ENCODE measurements at regions of chr15 and their contacts with region 1.

Region 1: GRCh38 chr15:31344823-31345605 is 18.4 kb downstream of the KLF13 start:
- DNase-seq: peak; percentile 65
- ATAC-seq: peak; percentile 12
- H3K4me3 Mint-ChIP-seq: peak overlapping the region; percentile 87
- H3K27ac Mint-ChIP-seq: peak overlapping the region; percentile 97
- H3K4me1 Mint-ChIP-seq: peaks cover 97% of the 10 kb centered on the region
- H3K27me3 Mint-ChIP-seq: no peaks in the 10 kb centered on the region

Region 2: DNA sequence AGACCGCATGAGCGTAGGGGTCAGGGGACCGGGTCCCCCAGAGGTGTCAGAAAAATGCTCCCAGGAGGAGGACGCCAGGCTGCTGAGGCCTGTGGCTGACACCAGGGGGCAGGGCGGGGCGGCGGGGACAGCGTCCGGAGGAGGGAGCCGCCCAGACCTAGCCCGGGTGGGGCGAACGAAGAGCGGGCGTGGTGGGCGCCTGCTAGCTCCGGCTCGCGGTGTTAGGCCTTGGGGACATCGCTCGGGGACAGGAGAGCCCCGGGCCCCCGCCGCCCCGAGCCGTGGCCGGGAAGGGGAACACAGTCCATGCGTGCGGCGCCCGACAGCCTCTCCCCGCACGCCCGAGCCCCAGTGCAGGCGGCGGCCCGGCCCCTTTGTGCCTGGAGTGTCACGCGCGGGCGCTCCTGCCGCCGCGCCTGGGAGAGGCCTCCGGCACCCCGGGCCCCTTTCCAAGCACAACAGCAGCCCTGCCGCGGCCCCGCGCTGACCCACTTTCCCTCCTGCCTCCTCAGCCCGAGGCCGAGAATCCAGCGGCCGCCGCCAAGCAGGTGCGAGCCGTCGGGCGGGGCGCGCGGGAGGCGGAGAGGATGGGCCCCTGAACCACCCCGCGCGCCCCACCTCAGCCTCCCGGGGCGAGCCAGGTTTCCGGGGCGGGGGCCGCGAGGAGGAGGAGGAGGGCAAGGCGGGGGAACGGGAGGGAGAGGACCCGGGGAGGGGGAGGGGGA is 129.4 kb before region 1 on chr15:
- CTCF ChIA-PET with region 1: interaction called, 3 read pairs
- POLR2A ChIA-PET with region 1: no interaction called
- intact Hi-C with region 1: loop called (anchors 2 to 5 kb)
- DNase-seq: peak; percentile 93
- ATAC-seq: peak; percentile 89
- H3K4me3 Mint-ChIP-seq: peak overlapping the region; percentile 72
- H3K27ac Mint-ChIP-seq: peak overlapping the region; percentile 56
- H3K4me1 Mint-ChIP-seq: peaks cover 17% of the 10 kb centered on the region
- H3K27me3 Mint-ChIP-seq: no peaks in the 10 kb centered on the region

Region 3: GRCh38 chr15:31265871-31266711 is 78.9 kb before region 1 on chr15:
- CTCF ChIA-PET with region 1: no interaction called
- POLR2A ChIA-PET with region 1: interaction called, 3 read pairs
- intact Hi-C with region 1: loop called in 1 of 2 experiments (anchors 2 kb)
- DNase-seq: peak; percentile 78
- ATAC-seq: peak; percentile 75
- H3K4me3 Mint-ChIP-seq: peak overlapping the region; percentile 11
- H3K27ac Mint-ChIP-seq: peak overlapping the region; percentile 77
- H3K4me1 Mint-ChIP-seq: peaks cover 78% of the 10 kb centered on the region
- H3K27me3 Mint-ChIP-seq: peaks cover 2% of the 10 kb centered on the region

Region 4: DNA sequence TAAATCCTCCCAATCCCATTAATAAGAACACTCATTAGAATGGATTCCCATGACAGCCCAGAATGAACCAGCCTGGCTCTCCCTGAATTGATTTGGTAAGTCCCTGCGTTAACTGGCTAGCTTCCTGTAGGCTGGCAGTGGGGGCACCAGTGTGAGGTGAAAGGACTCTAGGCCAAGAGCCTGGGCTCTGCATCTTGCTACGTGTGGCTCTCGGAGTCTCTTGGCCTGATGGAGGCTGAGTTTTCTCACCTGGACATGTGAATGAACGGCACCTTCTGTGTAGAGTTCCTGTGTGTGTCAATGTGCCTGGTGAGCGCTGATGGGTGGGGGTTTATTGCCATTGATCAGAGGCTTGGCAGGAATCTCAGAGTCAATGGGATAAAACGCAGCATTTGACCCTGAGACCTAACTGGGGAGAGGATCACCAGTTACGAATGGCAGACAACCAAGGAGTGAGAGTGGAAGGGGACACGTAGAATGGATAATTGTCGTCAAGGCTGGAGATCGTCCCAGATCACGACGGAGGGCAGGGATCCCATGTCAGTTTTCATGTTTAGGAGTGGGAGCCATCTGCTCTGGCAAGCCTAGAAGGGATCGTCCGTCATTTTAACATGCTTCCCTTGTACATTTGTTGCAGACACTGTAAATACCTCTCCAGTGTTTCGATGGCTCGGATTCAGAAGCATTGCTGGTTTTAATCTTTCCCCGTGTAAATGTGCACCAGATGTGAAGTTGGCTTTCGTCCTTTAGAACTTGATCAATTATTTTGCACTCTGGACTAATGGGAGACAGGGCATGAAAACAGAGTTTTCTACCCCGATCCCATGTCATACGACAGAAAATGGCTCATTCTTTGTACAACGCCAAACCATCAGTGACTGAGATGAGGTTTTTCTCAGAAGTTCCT is 27.3 kb before region 1 on chr15:
- CTCF ChIA-PET with region 1: no interaction called
- POLR2A ChIA-PET with region 1: no interaction called
- intact Hi-C with region 1: no loop called
- DNase-seq: no peak
- ATAC-seq: no peak
- H3K4me3 Mint-ChIP-seq: no peak overlapping the region
- H3K27ac Mint-ChIP-seq: no peak overlapping the region
- H3K4me1 Mint-ChIP-seq: peaks cover 18% of the 10 kb centered on the region
- H3K27me3 Mint-ChIP-seq: no peaks in the 10 kb centered on the region

Region 5: DNA sequence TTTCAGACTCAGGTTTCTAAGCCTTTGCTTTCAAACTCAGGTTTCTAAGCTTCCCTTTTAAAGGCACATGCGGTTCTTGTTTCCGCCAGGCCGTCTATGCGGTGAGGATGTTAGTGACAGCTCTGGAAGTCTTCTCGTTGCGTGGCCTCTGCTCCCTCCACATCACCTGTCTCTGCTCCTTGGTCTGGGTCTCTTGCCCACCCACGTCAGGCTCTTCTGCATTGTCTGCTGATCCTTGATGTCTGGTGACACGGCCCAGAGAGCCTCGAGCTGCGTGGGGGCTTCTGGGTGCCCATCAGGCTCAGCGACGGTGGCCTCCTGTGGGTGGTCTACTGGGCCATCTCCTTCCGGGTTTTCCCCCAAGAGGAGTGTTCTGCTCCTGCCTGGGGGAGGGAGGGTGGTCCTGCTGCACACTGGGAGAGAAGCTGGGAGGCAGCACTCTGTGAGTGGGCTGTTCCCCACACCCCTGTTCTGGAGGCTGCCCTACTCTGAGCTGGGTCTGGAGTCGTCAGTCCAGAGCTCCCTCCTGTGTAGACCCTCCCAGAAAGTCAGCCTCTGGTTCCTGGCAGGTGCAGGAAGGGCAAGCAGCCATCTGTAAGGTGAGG is 12.2 kb after region 1 on chr15:
- CTCF ChIA-PET with region 1: interaction called, 13 read pairs
- POLR2A ChIA-PET with region 1: interaction called, 15 read pairs
- intact Hi-C with region 1: loop called (anchors 1 to 2 kb)
- DNase-seq: peak; percentile 59
- ATAC-seq: no peak
- H3K4me3 Mint-ChIP-seq: peak overlapping the region; percentile 68
- H3K27ac Mint-ChIP-seq: peak overlapping the region; percentile 97
- H3K4me1 Mint-ChIP-seq: peaks cover 99% of the 10 kb centered on the region
- H3K27me3 Mint-ChIP-seq: no peaks in the 10 kb centered on the region

Region 6: DNA sequence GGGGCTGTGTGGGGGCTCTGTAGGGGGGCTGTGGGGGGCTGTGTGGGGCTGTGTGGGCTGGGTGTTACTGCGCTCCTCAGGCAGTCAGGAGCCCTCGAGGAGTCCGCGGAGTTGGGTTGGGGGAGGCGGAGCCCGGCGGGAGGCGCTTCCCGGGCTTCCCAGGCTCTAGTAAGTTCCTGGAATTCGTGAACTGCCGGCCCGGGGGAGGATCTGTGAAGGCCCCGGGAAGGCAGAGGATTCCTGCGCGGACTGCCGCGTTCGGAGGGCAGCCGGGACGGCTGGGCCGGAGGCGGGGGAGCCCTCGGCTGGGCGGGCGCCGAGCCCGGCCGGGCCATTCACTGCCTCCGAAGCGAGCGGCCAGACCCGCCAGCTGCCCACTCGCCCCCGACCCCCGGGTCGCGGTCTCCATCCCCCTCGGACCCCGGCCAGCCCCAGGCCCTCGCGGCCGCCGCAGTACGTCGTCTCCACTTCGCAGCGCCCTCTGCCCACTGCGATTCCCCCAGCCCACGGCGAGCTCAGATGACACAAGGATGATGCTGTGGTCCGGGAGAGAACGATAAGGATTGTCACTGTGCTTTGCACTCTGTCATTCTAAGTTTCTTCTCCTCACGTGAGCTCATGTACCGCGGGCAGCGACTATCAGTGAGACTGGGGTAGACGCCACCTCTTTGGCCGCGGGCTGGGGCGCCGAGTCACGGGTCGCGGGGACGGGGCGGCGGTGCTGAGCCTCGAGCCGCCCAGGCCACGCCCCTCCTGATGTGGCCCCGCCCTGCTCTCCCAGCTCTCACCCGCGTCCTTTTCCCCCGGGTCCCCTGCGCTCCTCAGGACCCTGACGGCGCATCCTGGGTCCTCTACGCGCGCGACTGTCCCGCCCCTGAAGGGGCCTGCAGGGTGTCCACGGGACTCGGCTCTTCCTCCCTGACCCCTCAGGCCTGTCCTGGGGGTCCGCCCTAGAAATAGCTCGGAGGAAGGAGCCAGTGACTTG is 47.0 kb after region 1 on chr15:
- CTCF ChIA-PET with region 1: interaction called, 3 read pairs
- POLR2A ChIA-PET with region 1: interaction called, 5 read pairs
- intact Hi-C with region 1: loop called (anchors 2 to 5 kb)
- DNase-seq: peak; percentile 90
- ATAC-seq: peak; percentile 92
- H3K4me3 Mint-ChIP-seq: peak overlapping the region; percentile 80
- H3K27ac Mint-ChIP-seq: peak overlapping the region; percentile 71
- H3K4me1 Mint-ChIP-seq: peaks cover 40% of the 10 kb centered on the region
- H3K27me3 Mint-ChIP-seq: no peaks in the 10 kb centered on the region

Measured in activated CD4-positive, alpha-beta T cell treated with anti-CD3 and anti-CD28 coated beads for 36 hours (primary cell).